GM13977 (cell line): ENCODE measurements at regions of chr15 and their contacts with region 1.

Region 1: GRCh38 chr15:70826634-70827033 is 27.3 kb downstream of the LARP6 start:
- DNase-seq: no peak
- CTCF ChIP-seq: no peak

Region 2: DNA sequence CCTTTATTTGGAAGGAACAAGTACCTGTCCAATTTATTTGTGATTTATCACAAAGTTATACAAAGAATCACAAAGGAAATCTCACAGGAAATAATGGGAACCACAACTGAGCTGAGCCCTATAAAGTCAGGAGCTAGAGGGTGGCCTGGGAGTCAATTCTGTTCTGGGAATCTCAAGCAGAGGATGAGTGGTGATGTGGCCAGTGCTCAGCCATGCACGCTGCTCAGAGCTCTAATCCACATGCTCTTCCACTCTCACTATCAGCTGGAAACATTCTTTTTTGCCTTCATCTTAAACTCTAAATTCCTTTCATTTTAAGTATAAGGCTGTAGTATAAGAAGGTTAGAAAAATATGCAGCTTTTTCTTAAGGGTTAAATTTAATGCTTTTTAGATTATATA is 99.9 kb before region 1 on chr15:
- in situ Hi-C with region 1: no loop called
- DNase-seq: no peak
- CTCF ChIP-seq: no peak

Region 3: DNA sequence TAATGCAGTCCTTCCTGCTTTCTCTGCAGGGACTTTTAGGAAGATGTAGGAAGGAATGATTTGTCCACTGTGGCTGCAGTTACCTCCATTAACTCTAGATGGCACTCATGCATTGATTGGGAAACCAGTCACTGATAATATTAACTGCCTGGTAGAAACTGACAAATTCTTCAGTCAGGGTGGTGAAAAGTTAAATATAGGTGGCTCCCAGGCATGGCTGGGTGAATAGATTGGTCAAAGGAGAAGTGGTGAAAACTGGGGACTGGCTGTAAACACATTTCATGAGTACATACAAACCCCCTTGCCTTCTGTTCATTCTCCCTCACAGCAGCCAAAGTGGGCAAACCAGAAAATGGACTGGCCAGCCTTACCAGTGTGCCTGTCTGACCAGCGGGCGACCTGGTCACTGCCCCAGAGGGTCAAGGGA is 622.1 kb after region 1 on chr15:
- in situ Hi-C with region 1: loop called (anchors 25 kb)
- DNase-seq: peak; percentile 33
- CTCF ChIP-seq: peak; percentile 85